Dorsolateral prefrontal cortex (tissue), 120 donors: ENCODE measurements at regions of chr19 and their contacts with region 1.

Region 1: DNA sequence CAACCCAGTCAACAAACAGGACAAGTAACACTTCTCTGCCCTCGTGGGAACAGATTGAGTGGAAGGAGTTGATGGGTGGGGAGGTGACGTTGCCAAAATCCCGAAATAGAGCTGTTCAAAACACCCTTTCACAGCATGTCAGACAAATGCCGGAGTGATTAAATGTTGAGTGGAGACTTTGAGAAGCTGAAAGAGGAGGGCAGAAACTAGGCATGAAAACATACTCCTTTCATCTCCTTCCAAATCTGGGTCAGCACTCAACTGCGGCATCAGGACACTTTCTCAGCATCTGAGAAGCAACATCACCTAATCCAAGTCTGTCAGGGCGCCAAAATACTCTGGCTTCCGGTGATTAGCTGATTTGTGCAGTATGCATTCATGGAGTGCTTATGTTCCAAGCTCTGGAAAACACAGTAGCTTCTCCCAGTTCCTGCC is 51.5 kb upstream of the MRI1 start:
- DNase-seq: peak in 3 of 10 donors; percentile 46 to 56 (median 47)
- H3K4me3 ChIP-seq: no peak overlapping the region
- H3K27ac ChIP-seq: peak overlapping the region in 8 of 59 donors; percentile 15 to 32 (median 23)
- H3K27me3 ChIP-seq: peaks cover 0 to 3% (median 0%) of the 10 kb centered on the region in 45 donors
- CTCF ChIP-seq: no peak

Region 2: GRCh38 chr19:13604902-13605586 is 107.7 kb before region 1 on chr19:
- intact Hi-C with region 1: no loop called
- DNase-seq: no peak
- H3K4me3 ChIP-seq: no peak overlapping the region
- H3K27ac ChIP-seq: no peak overlapping the region
- H3K27me3 ChIP-seq: peaks cover 0 to 3% (median 0%) of the 10 kb centered on the region in 45 donors
- CTCF ChIP-seq: no peak

Region 3: DNA sequence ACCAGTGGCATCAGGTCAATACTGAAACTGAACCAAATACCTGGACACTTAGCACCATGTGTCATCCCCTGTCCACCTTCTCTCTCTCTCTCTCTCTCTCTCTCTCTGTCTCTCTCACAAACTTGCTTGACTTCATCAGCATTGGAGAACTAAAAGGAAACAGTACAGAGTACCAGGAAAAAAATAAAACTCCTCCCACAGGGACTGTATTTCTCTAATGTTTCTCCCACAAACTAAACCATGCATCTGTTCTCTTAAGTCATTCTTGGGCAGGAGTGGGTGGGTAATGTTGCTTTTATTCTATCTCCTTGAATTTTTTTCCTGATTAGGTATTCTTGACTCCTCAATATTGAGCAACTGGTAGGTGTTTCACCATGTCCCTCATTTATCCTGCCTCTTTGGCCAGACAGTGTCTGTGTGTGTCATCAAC is 93.6 kb before region 1 on chr19:
- intact Hi-C with region 1: loop called in 1 of 2 experiments (anchors 5 kb)
- DNase-seq: no peak
- H3K4me3 ChIP-seq: no peak overlapping the region
- H3K27ac ChIP-seq: no peak overlapping the region
- H3K27me3 ChIP-seq: peaks cover 0 to 19% (median 4%) of the 10 kb centered on the region in 45 donors
- CTCF ChIP-seq: no peak

Region 4: DNA sequence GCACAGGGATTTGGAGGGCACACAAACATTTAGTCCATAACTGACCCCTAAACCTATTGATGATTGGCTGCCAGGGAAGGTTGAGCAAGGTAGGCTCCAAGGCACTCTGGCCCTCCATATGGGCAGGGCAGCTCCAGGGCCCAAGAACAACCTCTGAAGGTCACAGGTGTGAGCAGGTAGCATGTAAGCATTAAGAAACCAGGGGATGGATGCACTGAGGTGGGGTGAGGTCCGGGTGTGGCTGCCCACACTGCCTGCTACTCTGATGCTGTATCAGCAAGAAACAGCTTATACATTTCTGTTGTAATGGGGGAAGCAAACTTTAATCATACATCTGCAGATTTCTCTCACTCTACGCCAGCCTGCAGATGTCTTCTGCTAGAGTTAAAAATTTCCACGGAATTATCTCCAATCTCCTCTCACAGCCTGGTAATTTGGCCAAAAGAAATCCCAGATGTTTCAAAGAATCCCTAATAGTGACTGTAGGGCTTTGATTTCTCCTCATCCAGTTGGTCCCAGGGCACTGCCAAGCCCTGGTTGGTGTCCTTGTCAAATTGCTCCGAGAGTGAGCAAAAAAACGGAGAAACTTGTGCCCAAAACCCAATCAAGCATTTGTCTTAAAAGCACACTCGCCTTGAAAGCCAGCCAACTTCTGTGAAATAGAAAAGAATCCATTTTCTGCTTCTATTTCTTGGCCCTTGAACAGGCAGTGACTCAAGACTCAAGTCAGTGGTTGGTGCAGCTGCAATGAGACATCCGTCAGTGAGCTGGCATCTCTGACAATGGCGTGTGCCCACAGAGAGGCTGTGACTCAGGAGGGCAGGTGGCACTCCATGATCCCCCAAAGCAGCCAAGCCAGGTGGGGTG is 21.0 kb before region 1 on chr19:
- intact Hi-C with region 1: no loop called
- DNase-seq: peak; percentile 26 to 85 (median 64)
- H3K4me3 ChIP-seq: peak overlapping the region in 3 of 59 donors; percentile 7 to 12 (median 9)
- H3K27ac ChIP-seq: peak overlapping the region in 58 of 59 donors; percentile 5 to 91 (median 66)
- H3K27me3 ChIP-seq: peaks cover 0 to 6% (median 0%) of the 10 kb centered on the region in 45 donors
- CTCF ChIP-seq: no peak